Cardiac septum (tissue), 1 donor: ENCODE measurements at regions of chr11 and their contacts with region 1.

Region 1: GRCh38 chr11:66408488-66409214 is 12.2 kb upstream of the NPAS4 start:
- DNase-seq: peak; percentile 94

Region 2: GRCh38 chr11:66371627-66372415 is 36.8 kb before region 1 on chr11 and contains the start of gene SLC29A2:
- intact Hi-C with region 1: no loop called
- DNase-seq: peak; percentile 80
- total RNA-seq, gene SLC29A2: 8.8 TPM

Region 3: DNA sequence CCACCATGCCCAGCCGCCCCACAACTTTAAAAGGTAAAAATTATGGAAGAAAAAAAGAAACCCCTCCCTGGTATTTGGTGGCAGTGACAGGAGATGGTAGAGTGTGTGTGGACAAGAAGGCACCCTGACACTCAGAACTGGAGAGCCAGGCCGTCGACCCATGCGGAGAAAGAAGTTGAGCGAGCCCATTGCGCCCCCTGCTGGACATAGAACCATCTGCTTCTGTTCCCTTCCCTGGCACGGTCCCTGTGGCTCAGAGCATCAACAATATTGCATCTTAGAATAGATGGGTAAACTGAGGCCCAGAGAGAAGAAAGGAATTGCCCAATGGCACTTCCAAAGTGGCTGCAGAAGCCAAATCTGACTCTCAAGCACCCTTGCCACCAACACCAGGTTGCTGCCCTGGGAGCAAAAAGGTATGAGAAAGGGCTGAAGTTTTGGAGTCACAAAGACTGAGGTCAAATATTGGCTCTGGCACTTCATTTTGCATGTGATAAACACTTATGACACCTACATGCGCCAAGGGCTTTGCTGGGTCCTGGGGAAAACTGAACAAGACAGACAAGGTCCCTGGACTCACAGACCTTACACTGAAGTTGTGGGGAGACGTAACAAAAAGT is 21.4 kb after region 1 on chr11:
- intact Hi-C with region 1: loop called (anchors 1 kb)
- DNase-seq: peak; percentile 83

Region 4: GRCh38 chr11:66438504-66439466 is 30.1 kb after region 1 on chr11 and contains the start of gene MRPL11:
- intact Hi-C with region 1: loop called (anchors 2 kb)
- DNase-seq: peak; percentile 92
- total RNA-seq, gene MRPL11: 40.3 TPM